ENCODE measurements at regions of chr6 and their contacts with region 1.

Region 1: DNA sequence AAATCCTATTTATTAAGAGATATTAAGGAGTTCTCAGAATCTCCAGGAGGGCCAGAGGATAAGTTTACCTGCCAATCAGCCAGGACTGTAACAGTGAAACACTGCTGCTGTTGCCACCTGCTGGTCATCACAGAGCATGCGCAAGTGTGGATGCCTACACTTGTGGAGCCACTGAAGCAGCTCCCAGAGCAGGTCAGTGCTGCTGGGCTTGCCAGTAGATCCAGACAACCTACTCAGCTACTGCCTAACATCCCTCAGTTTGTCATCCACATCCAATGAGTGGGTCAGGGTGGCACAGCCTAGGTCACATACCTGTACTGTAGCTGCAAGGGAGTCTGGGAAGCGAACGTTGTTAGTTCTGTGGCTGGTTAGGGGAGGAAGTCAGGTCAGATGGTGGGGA is 18.3 kb upstream of the NHSL1 start:
- DNase-seq: peak; percentile 73
- H3K4me3 Mint-ChIP-seq: no peak overlapping the region
- H3K27ac Mint-ChIP-seq: no peak overlapping the region
- H3K4me1 Mint-ChIP-seq: peaks cover 2% of the 10 kb centered on the region
- H3K27me3 Mint-ChIP-seq: peaks cover 3% of the 10 kb centered on the region

Region 2: GRCh38 chr6:137589067-137589848 is 928.4 kb before region 1 on chr6:
- CTCF ChIA-PET with region 1: no interaction called
- intact Hi-C with region 1: no loop called
- DNase-seq: peak; percentile 74
- H3K4me3 Mint-ChIP-seq: no peak overlapping the region
- H3K27ac Mint-ChIP-seq: no peak overlapping the region
- H3K4me1 Mint-ChIP-seq: peaks cover 7% of the 10 kb centered on the region
- H3K27me3 Mint-ChIP-seq: peaks cover 2% of the 10 kb centered on the region

Region 3: DNA sequence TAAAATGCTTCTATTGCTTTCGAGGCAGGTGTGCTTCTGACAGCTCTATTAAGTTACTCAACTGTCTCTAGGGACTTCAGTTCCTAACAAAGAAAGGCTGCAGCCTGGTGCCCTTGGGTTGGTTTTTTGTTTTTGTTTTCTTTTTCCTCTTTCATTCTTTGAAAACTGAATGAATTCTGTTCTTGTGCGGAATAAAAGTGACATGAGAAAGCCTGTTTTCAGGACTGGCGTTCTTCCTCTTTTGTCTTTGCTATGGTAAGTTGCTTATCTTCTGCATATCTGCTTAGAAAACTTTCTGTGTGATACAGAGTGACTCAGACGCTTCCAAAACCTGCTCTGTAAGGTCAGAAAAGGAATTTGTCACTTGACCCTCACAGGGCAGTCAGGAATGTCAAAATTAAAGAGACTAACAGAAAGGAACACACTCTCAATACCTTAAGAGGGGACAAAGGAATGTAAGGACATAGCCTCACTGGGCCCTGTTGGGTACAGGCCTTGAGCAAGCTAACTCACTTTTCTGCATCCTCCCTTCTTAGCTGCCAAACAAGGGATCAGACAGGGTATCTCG is 37.9 kb after region 1 on chr6:
- CTCF ChIA-PET with region 1: no interaction called
- intact Hi-C with region 1: no loop called
- DNase-seq: no peak
- H3K4me3 Mint-ChIP-seq: no peak overlapping the region
- H3K27ac Mint-ChIP-seq: no peak overlapping the region
- H3K4me1 Mint-ChIP-seq: no peaks in the 10 kb centered on the region
- H3K27me3 Mint-ChIP-seq: peaks cover 3% of the 10 kb centered on the region

Region 4: GRCh38 chr6:138572167-138572865 is 54.7 kb after region 1 on chr6:
- CTCF ChIA-PET with region 1: no interaction called
- intact Hi-C with region 1: no loop called
- DNase-seq: peak; percentile 25
- H3K4me3 Mint-ChIP-seq: no peak overlapping the region
- H3K27ac Mint-ChIP-seq: no peak overlapping the region
- H3K4me1 Mint-ChIP-seq: peaks cover 3% of the 10 kb centered on the region
- H3K27me3 Mint-ChIP-seq: peaks cover 12% of the 10 kb centered on the region

Region 5: DNA sequence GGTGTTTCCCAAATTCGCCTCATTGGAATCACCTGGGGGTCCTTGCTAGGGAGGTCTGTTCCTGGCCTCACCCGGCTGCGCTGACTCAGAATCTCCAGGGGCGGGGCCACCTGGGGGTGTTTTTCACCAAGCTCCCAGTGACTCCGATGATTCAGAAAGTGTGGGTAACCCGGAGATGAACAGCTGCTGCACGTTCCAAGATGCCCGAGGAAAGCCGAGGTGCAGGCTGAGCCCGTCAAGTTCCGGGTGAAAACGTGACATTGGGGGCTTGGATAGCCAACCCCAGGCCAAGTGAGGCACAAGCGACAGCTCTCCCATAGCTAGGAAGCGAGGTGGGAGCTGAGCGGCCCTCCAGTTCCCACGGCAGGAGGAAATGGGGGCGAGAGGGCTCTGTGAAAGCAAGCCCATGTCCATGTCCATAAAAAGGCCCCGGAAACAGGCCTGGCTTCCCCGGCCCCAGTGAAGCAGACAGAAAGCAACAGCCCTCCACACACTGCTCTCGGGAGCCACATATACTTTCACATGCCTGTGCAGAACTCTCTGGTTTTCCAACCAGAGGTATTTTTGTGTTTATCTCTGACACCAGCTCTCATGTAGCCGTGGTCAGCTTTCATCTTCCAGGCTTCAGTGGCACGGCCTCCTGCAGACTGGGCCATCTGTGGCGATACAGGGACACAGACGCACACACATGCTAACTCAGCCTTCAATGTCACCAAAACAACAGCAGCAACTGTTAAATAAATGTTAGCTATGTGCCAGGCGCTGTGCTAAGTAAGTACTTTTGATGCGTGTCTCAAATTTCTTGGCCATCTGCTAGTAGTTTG is 165.3 kb after region 1 on chr6:
- CTCF ChIA-PET with region 1: interaction called, 13 read pairs
- intact Hi-C with region 1: no loop called
- DNase-seq: no peak
- H3K4me3 Mint-ChIP-seq: no peak overlapping the region
- H3K27ac Mint-ChIP-seq: no peak overlapping the region
- H3K4me1 Mint-ChIP-seq: no peaks in the 10 kb centered on the region
- H3K27me3 Mint-ChIP-seq: no peaks in the 10 kb centered on the region

Region 6: DNA sequence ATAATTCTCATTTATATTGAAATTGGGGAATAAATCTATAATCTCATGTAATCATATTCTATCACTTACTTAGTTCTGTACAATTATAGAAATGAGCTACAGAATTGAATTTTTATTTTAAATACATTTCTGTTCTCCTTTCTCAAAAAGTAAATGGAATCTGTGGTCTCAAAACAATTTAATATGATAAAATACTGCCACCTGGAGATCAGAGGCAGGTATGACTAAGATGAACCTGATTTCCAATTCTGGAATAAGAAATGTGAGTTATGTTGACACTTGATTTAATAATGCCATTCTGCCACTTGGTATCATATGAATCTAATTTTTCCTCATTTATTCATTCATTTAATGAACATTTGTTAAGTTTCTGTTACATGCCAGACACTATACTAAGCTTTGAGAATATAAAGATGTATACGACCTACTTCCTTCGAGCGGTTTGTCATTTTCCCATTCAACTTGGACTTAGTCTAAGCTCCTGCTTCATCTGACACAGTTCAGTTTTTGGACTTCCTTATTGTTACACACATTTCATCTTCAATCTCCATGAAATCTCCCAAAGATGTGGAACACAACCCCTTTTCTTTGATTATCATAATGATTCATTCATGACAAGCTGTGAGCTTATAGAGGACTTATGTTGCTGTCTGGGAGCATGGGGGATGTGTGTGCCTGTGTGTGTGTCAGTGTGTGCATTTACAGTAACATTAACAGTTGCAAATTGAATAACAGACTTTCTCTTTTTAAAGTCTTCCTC is 248.4 kb after region 1 on chr6:
- CTCF ChIA-PET with region 1: interaction called, 5 read pairs
- intact Hi-C with region 1: loop called (anchors 5 kb)
- DNase-seq: no peak
- H3K4me3 Mint-ChIP-seq: no peak overlapping the region
- H3K27ac Mint-ChIP-seq: no peak overlapping the region
- H3K4me1 Mint-ChIP-seq: peaks cover 16% of the 10 kb centered on the region
- H3K27me3 Mint-ChIP-seq: no peaks in the 10 kb centered on the region

Measured in activated naive CD4-positive, alpha-beta T cell treated with anti-CD3 and anti-CD28 coated beads for 36 hours (primary cell).